ENCODE measurements at regions of chr5 and their contacts with region 1.

Region 1: DNA sequence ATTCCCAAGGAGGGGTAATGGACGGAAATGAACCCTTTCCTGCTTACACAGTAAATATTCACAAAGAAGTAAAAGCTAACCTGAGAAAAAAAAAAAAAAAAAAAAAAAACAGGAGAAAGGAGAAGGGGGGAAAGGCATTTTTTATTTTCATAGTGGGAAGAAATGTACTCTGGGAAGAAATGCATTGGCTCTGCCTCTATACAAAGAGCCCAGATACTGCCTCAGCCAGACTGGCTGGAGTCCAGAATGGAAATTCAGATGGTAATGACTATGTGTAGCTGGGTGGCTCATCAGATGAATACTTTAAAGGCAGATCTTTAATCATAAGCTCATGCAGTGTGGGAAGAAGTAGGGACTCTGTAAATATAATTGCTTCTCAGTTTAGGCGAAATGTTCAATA is 124.9 kb upstream of the ZNF608 start:
- DNase-seq: no peak
- H3K4me3 ChIP-seq: no peak overlapping the region
- H3K27me3 ChIP-seq: no peaks in the 10 kb centered on the region
- CTCF ChIP-seq: no peak

Region 2: GRCh38 chr5:124663101-124663506 is 208.2 kb before region 1 on chr5:
- CTCF ChIA-PET with region 1: no interaction called
- POLR2A ChIA-PET with region 1: interaction called, 10 read pairs
- DNase-seq: no peak
- H3K4me3 ChIP-seq: no peak overlapping the region
- H3K27me3 ChIP-seq: no peaks in the 10 kb centered on the region
- CTCF ChIP-seq: no peak

Region 3: GRCh38 chr5:124790895-124791732 is 80.2 kb before region 1 on chr5:
- CTCF ChIA-PET with region 1: no interaction called
- POLR2A ChIA-PET with region 1: no interaction called
- DNase-seq: no peak
- H3K4me3 ChIP-seq: no peak overlapping the region
- H3K27me3 ChIP-seq: no peaks in the 10 kb centered on the region; the same call in 1 of the 2 replicates
- CTCF ChIP-seq: no peak

Region 4: DNA sequence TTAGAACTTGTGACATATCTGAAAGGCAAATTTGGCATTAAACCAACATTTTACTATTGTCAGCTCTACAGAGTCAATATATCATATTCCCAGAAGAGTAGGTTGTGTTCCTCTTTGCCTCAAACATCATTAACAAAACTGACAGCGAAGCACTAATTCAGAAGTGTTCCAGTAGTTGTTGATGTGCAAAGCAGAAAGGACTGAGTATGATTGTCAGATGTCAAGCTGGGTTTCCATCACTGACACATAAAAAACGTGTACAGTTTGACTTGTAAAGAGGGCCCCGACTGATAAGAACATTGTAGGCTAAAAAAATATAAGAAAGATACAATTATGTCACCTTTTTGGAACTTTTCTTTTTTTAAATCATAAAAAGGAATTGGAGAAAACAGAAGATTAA is 23.4 kb before region 1 on chr5:
- CTCF ChIA-PET with region 1: no interaction called
- POLR2A ChIA-PET with region 1: no interaction called
- DNase-seq: no peak
- H3K4me3 ChIP-seq: no peak overlapping the region
- H3K27me3 ChIP-seq: no peaks in the 10 kb centered on the region
- CTCF ChIP-seq: no peak

Measured in BJ (cell line).